HepG2 (cell line): ENCODE measurements at regions of chr14 and their contacts with region 1.

Region 1: DNA sequence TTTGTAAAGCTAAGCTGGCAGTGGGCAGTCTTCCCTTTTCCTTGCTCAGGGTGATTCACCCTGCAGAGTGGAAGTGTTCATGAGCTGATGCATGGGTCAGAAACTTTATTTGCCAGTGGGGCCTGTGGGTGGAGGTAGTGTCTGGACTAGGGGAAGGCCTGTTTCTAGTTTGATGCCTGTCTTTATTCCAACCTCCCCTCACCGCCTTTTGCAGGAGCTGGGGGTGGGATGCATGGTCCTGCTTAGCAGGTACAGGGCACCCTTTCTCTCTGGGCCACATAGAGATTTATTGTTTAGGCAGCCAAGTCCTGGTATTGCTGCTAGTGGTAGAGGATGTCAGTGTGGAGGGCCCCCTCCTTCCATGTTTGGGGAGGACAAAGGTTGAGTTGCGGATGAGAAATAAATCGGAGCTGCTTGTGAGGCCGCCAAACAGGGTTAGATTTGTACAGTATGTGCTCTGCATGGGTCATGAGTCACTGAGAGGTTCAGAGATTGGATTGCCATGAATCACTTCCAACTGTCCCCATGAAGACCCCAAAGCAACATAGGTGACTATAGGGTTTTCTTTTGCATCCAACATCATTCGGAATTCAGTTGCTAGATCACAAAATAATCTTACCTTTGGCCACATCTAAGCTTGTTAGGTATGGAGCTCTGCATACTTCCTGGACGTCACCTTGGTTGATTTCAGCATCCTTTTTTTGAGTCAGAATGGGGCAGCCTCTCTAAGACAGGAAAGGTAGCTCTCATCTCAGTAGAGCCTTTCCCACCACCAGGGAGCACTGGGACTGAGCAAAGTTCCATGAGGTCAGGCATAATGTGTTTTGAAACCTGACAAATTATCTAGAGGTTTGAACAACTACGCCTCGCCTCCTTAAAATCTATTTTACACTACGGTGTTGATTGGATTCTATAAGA is 8.8 kb downstream of the SMOC1 start:
- DNase-seq: peak; percentile 96
- ATAC-seq: peak; percentile 99
- H3K4me3 ChIP-seq: peak overlapping the region in 2 of 3 experiments; percentile 22 to 49; a peak in 2 of 6 replicates
- H3K27ac ChIP-seq: peak overlapping the region; percentile 86
- H3K4me1 ChIP-seq: peaks cover 44% of the 10 kb centered on the region
- H3K27me3 ChIP-seq: no peaks in the 10 kb centered on the region
- CTCF ChIP-seq: peak; percentile 28; the same call in 1 of the 2 replicates
- EP300 ChIP-seq: peak; percentile 25 to 86; a peak in 2 of 4 replicates
- POLR2A ChIP-seq: no peak
- RAD21 ChIP-seq: peak; percentile 21; the same call in 1 of the 2 replicates

Region 2: DNA sequence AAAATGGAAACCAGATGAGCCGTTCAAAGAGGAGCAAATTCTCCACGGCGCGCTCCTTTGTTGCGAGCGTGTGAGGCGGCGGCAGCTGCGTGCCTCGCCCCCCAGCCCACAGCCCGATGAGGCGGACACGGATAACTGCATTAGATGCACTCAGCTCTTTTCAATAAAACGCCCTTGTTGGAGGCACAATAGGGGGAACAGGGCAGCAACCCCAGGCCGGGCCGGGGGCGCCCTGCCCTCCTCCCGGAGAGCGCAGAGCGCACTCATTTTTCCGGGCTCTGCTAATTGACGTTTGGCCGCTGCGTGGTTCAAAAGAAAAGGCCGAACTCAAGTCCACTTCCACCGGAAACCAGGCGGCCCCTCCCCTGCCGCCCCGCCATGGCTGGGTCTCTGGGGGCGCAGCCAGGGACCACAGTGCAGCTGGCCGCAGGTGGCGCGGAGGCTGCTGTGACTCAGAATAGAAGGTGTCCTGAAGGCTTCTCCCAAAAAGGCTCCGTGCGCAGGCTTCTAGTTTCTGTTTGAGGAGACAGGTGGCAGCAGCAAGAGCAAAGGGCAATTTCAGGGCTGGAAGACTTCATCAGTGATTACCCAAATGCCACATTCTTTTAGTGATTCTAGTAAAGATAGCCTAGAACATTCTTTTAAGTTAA is 37.8 kb before region 1 on chr14:
- CTCF ChIA-PET with region 1: no interaction called
- POLR2A ChIA-PET with region 1: interaction called, 12 read pairs
- in situ Hi-C with region 1: no loop called
- intact Hi-C with region 1: no loop called
- DNase-seq: peak; percentile 86
- ATAC-seq: peak; percentile 85
- H3K4me3 ChIP-seq: peak overlapping the region; percentile 60 to 73 (median 71)
- H3K27ac ChIP-seq: peak overlapping the region; percentile 99
- H3K4me1 ChIP-seq: peaks cover 96% of the 10 kb centered on the region
- H3K27me3 ChIP-seq: no peaks in the 10 kb centered on the region
- CTCF ChIP-seq: peak; percentile 46
- EP300 ChIP-seq: peak in 1 of 2 experiments; percentile 73; a peak in 2 of 4 replicates
- POLR2A ChIP-seq: peak; percentile 72 to 89
- RAD21 ChIP-seq: peak; percentile 50